MCF 10A (cell line): ENCODE measurements at regions of chr9 and their contacts with region 1.

Region 1: GRCh38 chr9:6584881-6585597 is 60.5 kb downstream of the GLDC start:
- DNase-seq: peak; percentile 40
- H3K4me3 Mint-ChIP-seq: no peak overlapping the region
- H3K27ac Mint-ChIP-seq: no peak overlapping the region
- H3K4me1 Mint-ChIP-seq: no peaks in the 10 kb centered on the region
- H3K27me3 Mint-ChIP-seq: no peaks in the 10 kb centered on the region
- CTCF ChIP-seq: peak; percentile 38

Region 2: DNA sequence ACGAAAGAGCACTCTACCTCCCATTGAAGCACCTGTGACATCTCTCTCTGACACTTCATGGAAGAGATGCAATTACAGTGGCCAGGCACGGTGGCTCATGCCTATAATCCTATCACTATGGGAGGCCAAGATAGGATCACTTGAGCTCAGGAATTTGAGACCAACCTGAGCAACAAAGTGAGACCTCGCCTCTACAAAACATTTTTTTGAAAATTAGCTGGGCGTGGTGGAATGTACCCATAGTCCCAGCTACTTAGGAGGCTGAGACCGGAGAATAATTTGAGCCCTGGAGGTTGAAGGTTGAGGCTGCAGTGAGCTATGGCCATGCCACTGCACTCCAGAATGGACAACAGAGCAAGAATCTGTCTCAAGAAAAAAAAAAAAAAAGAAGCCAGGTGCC is 15.0 kb after region 1 on chr9:
- CTCF ChIA-PET with region 1: interaction called, 12 read pairs
- POLR2A ChIA-PET with region 1: no interaction called
- intact Hi-C with region 1: no loop called
- DNase-seq: no peak
- H3K4me3 Mint-ChIP-seq: no peak overlapping the region
- H3K27ac Mint-ChIP-seq: no peak overlapping the region
- H3K4me1 Mint-ChIP-seq: no peaks in the 10 kb centered on the region
- H3K27me3 Mint-ChIP-seq: no peaks in the 10 kb centered on the region
- CTCF ChIP-seq: no peak

Region 3: GRCh38 chr9:6632516-6633183 is 47.6 kb after region 1 on chr9:
- CTCF ChIA-PET with region 1: interaction called, 14 read pairs
- POLR2A ChIA-PET with region 1: no interaction called
- intact Hi-C with region 1: no loop called
- DNase-seq: peak; percentile 8
- H3K4me3 Mint-ChIP-seq: no peak overlapping the region
- H3K27ac Mint-ChIP-seq: no peak overlapping the region
- H3K4me1 Mint-ChIP-seq: peaks cover 26% of the 10 kb centered on the region
- H3K27me3 Mint-ChIP-seq: no peaks in the 10 kb centered on the region
- CTCF ChIP-seq: no peak

Region 4: GRCh38 chr9:6640268-6641072 is 55.4 kb after region 1 on chr9:
- CTCF ChIA-PET with region 1: interaction called, 13 read pairs
- POLR2A ChIA-PET with region 1: interaction called, 5 read pairs
- intact Hi-C with region 1: no loop called
- DNase-seq: peak; percentile 76
- H3K4me3 Mint-ChIP-seq: no peak overlapping the region
- H3K27ac Mint-ChIP-seq: peak overlapping the region; percentile 77
- H3K4me1 Mint-ChIP-seq: peaks cover 9% of the 10 kb centered on the region
- H3K27me3 Mint-ChIP-seq: no peaks in the 10 kb centered on the region
- CTCF ChIP-seq: no peak

Region 5: GRCh38 chr9:6686396-6686795 is 101.4 kb after region 1 on chr9:
- CTCF ChIA-PET with region 1: interaction called, 49 read pairs
- POLR2A ChIA-PET with region 1: interaction called, 4 read pairs
- intact Hi-C with region 1: no loop called
- DNase-seq: peak; percentile 33
- H3K4me3 Mint-ChIP-seq: no peak overlapping the region
- H3K27ac Mint-ChIP-seq: no peak overlapping the region
- H3K4me1 Mint-ChIP-seq: peaks cover 11% of the 10 kb centered on the region
- H3K27me3 Mint-ChIP-seq: no peaks in the 10 kb centered on the region
- CTCF ChIP-seq: peak; percentile 33

Region 6: DNA sequence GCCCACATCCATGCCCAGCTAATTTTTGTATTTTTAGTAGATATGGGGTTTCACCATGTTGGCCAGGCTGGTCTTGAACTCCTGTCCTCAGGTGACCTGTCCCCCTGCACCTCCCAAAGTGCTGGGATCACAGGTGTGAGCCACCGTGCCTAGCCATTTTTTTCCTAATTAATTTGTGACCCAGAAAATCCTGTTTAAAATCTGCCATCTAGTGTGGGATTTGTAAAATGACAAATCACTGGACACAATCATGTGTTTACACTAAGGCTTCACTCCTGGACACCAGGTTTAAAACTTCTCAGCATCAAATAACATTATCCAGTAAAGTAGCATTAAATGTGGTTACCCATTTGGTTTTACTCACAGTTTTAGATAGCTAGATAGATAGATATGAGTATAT is 154.2 kb after region 1 on chr9:
- CTCF ChIA-PET with region 1: interaction called, 13 read pairs
- POLR2A ChIA-PET with region 1: no interaction called
- intact Hi-C with region 1: loop called (anchors 1 kb)
- DNase-seq: peak; percentile 41
- H3K4me3 Mint-ChIP-seq: no peak overlapping the region
- H3K27ac Mint-ChIP-seq: no peak overlapping the region
- H3K4me1 Mint-ChIP-seq: no peaks in the 10 kb centered on the region
- H3K27me3 Mint-ChIP-seq: no peaks in the 10 kb centered on the region
- CTCF ChIP-seq: peak; percentile 32

Region 7: DNA sequence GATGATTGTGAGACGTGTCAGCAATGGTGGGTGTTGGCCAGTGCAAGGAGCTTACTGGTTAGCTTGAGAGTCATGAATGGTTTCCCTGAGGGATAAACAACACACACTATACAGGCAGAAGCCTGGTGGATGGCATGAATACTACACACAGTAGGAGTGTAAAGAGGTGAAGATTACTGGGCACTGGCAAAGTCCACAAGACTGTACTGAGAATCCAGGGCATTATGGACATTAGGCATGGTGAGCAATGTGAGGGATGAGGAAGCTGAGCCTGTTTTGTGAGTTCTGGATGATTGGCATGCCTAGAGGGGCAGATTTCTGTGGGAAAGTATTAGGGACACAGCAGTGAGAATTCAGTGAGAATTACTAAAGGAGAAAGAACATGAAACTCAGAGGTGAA is 244.0 kb after region 1 on chr9:
- CTCF ChIA-PET with region 1: no interaction called
- POLR2A ChIA-PET with region 1: no interaction called
- intact Hi-C with region 1: no loop called
- DNase-seq: no peak
- H3K4me3 Mint-ChIP-seq: no peak overlapping the region
- H3K27ac Mint-ChIP-seq: no peak overlapping the region
- H3K4me1 Mint-ChIP-seq: no peaks in the 10 kb centered on the region
- H3K27me3 Mint-ChIP-seq: no peaks in the 10 kb centered on the region
- CTCF ChIP-seq: no peak